Activated CD4-positive, alpha-beta memory T cell treated with anti-CD3 and anti-CD28 coated beads, Interleukin-2, amount 10 ng/mL, durations not matched to agents 7 days and 5 days (primary cell): ENCODE measurements at regions of chr17 and their contacts with region 1.

Region 1: DNA sequence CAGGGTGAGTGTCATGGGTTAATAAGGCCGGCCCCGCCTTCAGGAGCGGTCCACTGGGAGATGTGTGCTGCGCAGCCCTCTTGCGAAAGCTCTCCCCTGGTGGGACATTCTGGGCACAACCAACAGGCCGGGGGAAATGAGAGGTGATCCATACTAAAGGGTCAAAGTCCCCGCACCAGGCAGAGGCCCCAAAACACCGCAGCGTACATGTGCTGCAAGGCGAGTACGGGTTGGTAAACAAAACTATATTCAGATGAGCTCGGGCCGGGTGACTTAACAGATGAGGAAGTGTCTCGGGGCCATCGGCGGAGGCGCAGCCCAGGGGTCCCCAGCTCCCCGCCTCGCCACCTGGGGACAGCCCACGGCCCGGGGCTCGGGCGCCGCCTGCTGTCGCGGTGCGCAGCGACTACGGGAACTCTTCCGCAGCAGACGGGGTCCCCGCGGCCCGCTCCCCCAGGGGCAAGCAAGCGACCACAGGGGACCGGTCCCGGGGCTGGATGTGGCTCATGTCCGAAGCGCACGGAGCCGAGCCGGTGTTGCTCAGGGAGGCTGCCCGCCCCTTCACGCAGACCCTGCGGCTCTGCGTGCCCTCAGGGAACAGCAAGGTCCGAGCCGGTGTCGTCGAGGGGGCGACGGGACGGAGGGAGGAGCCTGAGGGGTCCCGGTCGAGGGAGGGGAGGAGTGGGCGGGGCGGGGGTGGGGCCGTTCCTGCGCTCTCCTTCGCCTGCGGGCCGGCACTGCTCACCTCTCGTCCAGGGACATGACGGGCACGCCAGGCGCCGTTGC is at the start of gene RAB37:
- DNase-seq: peak; percentile 55
- H3K4me3 Mint-ChIP-seq: peak within 1 kb of the TSS; percentile 87
- H3K27ac Mint-ChIP-seq: peak within 1 kb of the TSS; percentile 89
- H3K4me1 Mint-ChIP-seq: peaks cover 53% of the 10 kb centered on the region
- H3K27me3 Mint-ChIP-seq: peaks cover 5% of the 10 kb centered on the region
- total RNA-seq, gene RAB37: 56.1 to 58.5 TPM

Region 2: GRCh38 chr17:74677558-74678466 is 58.9 kb before region 1 on chr17:
- CTCF ChIA-PET with region 1: interaction called, 18 read pairs
- POLR2A ChIA-PET with region 1: interaction called, 5 read pairs
- DNase-seq: no peak
- H3K4me3 Mint-ChIP-seq: no peak overlapping the region
- H3K27ac Mint-ChIP-seq: peak overlapping the region; percentile 34
- H3K4me1 Mint-ChIP-seq: peaks cover 19% of the 10 kb centered on the region
- H3K27me3 Mint-ChIP-seq: peaks cover 58% of the 10 kb centered on the region

Region 3: DNA sequence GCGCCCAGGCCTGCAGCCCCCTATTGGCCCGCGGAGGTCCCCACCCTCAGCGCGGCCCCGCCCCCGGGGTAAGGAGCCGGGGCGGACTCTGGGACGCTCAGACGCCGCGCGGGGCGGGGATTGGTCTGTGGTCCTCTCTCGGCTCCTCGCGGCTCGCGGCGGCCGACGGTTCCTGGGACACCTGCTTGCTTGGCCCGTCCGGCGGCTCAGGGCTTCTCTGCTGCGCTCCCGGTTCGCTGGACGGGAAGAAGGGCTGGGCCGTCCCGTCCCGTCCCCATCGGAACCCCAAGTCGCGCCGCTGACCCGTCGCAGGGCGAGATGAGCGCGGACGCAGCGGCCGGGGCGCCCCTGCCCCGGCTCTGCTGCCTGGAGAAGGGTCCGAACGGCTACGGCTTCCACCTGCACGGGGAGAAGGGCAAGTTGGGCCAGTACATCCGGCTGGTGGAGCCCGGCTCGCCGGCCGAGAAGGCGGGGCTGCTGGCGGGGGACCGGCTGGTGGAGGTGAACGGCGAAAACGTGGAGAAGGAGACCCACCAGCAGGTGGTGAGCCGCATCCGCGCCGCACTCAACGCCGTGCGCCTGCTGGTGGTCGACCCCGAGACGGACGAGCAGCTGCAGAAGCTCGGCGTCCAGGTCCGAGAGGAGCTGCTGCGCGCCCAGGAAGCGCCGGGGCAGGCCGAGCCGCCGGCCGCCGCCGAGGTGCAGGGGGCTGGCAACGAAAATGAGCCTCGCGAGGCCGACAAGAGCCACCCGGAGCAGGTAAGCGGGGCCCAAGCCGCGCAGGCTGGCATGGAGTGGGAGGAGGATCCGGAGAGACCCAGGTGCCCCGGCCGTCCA is 12.0 kb after region 1 on chr17 and contains the start of gene NHERF1:
- CTCF ChIA-PET with region 1: interaction called, 93 read pairs
- POLR2A ChIA-PET with region 1: interaction called, 44 read pairs
- DNase-seq: peak; percentile 96
- H3K4me3 Mint-ChIP-seq: peak within 1 kb of the TSS; percentile 94
- H3K27ac Mint-ChIP-seq: peak within 1 kb of the TSS; percentile 85
- H3K4me1 Mint-ChIP-seq: peaks cover 61% of the 10 kb centered on the region
- H3K27me3 Mint-ChIP-seq: no peaks in the 10 kb centered on the region
- total RNA-seq, gene NHERF1: 320 to 328 TPM

Region 4: DNA sequence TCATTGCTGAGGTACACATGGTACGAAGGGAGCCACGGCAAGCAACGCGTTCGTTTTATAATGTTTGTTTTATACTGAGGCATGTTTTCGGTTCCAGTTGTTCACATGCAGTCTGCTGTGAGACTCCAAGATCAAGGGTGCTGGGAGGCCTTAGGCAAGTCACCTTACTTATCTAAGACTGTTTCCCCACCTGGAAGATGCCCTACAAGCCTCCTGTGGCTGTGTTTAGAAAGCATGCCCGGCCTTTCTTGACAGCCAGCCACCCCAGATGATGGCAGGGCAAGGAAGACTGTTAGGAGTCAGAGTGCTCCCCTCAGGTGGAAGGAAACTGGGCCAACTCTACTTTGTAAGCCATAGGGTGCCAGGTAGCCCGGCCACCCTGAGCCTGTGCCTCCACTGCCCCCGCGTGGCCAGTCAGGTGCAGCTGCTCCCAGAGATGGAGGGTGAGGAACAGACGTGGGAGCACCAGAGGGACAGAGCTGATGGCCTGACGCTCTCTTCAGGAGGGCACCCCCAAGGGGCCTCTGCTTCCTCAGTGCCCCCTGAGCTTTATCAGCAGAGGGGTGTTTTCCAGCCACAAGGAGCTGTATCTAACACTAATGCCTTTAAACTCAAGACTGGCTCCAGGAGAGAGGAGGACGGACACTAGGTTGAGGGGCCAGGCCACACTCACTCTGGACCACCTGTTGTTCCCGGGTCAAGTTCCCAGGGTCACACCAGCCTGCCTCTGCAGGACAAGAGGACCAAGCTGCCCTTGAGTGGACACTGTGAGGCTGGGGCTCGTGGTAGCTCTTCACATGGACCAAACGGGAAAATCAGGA is 34.0 kb after region 1 on chr17:
- CTCF ChIA-PET with region 1: interaction called, 17 read pairs
- POLR2A ChIA-PET with region 1: interaction called, 28 read pairs
- DNase-seq: peak; percentile 78
- H3K4me3 Mint-ChIP-seq: no peak overlapping the region
- H3K27ac Mint-ChIP-seq: peak overlapping the region; percentile 48
- H3K4me1 Mint-ChIP-seq: peaks cover 42% of the 10 kb centered on the region
- H3K27me3 Mint-ChIP-seq: no peaks in the 10 kb centered on the region

Region 5: GRCh38 chr17:74790161-74791054 is 53.7 kb after region 1 on chr17:
- CTCF ChIA-PET with region 1: interaction called, 22 read pairs
- POLR2A ChIA-PET with region 1: interaction called, 4 read pairs
- DNase-seq: no peak
- H3K4me3 Mint-ChIP-seq: no peak overlapping the region
- H3K27ac Mint-ChIP-seq: peak overlapping the region; percentile 41
- H3K4me1 Mint-ChIP-seq: peaks cover 40% of the 10 kb centered on the region
- H3K27me3 Mint-ChIP-seq: no peaks in the 10 kb centered on the region

Region 6: GRCh38 chr17:74873038-74873873 is 136.6 kb after region 1 on chr17:
- CTCF ChIA-PET with region 1: interaction called, 5 read pairs
- POLR2A ChIA-PET with region 1: interaction called, 13 read pairs
- DNase-seq: peak; percentile 100
- H3K4me3 Mint-ChIP-seq: peak overlapping the region; percentile 96
- H3K27ac Mint-ChIP-seq: peak overlapping the region; percentile 86
- H3K4me1 Mint-ChIP-seq: peaks cover 40% of the 10 kb centered on the region
- H3K27me3 Mint-ChIP-seq: no peaks in the 10 kb centered on the region